Head of caudate nucleus (tissue), 42 donors: ENCODE measurements at regions of chr14 and their contacts with region 1.

Region 1: DNA sequence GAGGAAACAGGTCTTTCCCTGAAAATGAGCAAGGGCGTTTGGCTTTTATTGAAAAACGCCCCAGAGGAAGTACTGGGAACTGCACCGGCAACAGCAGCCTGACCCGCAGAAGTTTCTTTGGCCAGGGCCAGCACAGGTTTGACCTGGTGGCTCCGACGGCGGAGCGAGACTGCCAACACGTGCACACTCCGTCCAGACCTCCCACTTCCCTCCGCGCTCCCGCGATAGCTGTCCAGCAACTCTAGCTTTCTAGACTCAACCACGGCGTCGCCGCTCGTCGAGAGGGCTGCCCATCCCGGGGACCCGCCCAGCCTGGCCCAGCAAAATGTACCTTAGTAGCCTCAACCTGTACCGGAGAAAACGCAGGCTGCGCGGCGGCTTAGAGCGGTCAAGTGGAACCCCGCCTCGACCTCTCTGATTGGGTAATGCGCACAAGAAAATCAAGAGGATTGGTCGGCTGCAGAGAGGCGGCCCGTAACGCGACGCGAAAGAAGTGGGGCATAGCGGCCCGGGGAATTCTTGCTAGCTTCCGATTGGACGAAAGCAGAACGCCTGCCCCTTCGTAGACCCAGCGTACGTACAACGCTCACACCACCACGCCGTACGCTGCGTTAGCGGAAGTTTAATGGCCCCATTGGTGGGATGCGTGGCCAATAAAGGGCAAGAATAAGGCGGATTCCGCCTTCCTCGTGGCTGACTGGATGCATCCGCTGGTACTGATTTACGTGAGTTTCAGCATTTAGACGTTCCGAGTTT is at the start of gene WDR89:
- DNase-seq: peak; percentile 93 to 99 (median 98)

Region 2: GRCh38 chr14:63727774-63728728 is 86.4 kb after region 1 on chr14 and contains the start of gene SGPP1:
- intact Hi-C with region 1: loop called (anchors 5 kb)
- DNase-seq: peak; percentile 31 to 88 (median 73)

Region 3: DNA sequence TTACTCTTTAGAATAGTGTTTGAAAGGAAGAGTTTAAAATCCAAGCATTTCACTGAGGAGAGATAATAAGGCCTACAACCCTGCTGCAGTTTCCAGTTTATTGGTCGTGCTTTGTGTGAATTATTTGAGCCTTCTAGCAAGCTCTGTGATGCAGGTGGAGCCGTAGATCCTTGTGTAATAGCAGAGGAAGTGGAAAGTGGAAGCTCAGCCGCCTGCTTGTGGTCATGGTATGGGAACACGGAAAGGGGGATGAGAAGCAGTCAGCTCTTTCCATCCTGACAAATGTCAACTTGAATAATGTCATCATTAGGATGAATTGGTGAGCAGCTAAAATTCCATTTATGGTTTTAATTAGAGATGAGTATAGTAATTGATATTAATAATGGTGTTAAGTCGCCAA is 240.3 kb after region 1 on chr14:
- intact Hi-C with region 1: no loop called
- DNase-seq: no peak